ENCODE measurements at regions of chr1 and their contacts with region 1.

Region 1: DNA sequence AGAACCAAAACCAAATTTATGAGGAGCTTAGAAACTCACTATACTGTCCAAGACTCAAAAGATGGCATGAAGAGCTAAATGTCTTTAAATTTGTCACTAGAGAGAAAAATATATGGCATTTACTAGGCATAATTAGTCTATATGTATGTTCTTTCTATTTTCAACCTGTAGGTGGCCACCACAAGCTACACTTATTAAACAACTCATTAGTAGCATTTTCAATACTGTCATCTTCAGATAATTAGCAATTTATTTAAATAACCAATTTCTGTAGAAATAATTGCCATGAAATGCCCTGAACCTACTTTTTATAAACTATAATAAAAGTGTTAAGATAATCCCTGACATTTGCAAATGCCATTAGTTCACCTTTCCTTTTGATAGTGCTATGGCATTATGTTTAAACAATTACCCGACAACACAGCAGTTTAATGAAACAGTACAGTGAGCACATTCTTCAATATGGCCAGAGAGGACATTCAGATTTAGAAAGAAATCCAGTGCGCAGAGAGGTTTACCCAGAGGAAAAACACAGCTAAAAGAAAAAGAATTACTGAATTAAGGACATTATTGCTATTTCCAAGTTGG is 522.5 kb downstream of the PTBP2 start:
- DNase-seq: peak; percentile 12
- ATAC-seq: 0 out of 2 replicates have a peak, but pooled peaks have one; percentile 52
- H3K4me3 ChIP-seq: no peak overlapping the region
- H3K27ac ChIP-seq: no peak overlapping the region
- H3K4me1 ChIP-seq: no peaks in the 10 kb centered on the region
- H3K27me3 ChIP-seq: no peaks in the 10 kb centered on the region
- CTCF ChIP-seq: peak; percentile 38 to 62 (median 55); a peak in 5 of 6 replicates
- POLR2A ChIP-seq: no peak
- RAD21 ChIP-seq: peak; percentile 71

Region 2: GRCh38 chr1:97254731-97255463 is 10.8 kb after region 1 on chr1:
- CTCF ChIA-PET with region 1: interaction called, 14 read pairs
- POLR2A ChIA-PET with region 1: no interaction called
- RAD21 ChIA-PET with region 1: no interaction called
- intact Hi-C with region 1: no loop called
- DNase-seq: no peak
- ATAC-seq: no peak
- H3K4me3 ChIP-seq: no peak overlapping the region
- H3K27ac ChIP-seq: no peak overlapping the region
- H3K4me1 ChIP-seq: no peaks in the 10 kb centered on the region
- H3K27me3 ChIP-seq: no peaks in the 10 kb centered on the region
- CTCF ChIP-seq: no peak
- POLR2A ChIP-seq: no peak
- RAD21 ChIP-seq: no peak

Region 3: GRCh38 chr1:97505816-97506215 is 261.7 kb after region 1 on chr1:
- CTCF ChIA-PET with region 1: no interaction called
- POLR2A ChIA-PET with region 1: no interaction called
- RAD21 ChIA-PET with region 1: no interaction called
- intact Hi-C with region 1: no loop called
- DNase-seq: no peak
- ATAC-seq: no peak
- H3K4me3 ChIP-seq: no peak overlapping the region
- H3K27ac ChIP-seq: no peak overlapping the region
- H3K4me1 ChIP-seq: no peaks in the 10 kb centered on the region
- H3K27me3 ChIP-seq: no peaks in the 10 kb centered on the region
- CTCF ChIP-seq: no peak
- POLR2A ChIP-seq: no peak
- RAD21 ChIP-seq: no peak

Region 4: DNA sequence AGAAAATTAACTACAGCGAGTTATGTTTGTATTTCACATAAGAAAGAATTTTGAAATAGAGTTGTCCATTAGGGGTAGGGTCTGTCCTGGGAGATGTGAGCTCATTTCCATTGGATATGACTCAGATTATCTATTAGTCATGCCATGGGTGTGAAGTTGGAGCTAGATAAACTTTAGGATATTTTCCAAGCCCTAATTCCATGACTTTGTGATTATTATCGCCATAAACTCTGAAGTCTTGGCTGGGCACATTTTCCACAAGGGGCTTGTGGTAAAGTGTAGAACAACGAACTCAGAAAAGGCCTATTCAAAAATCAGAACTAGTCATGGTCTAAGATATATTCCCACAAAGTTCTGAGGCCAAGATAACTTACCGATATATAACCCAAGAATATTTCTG is 280.1 kb after region 1 on chr1:
- CTCF ChIA-PET with region 1: interaction called, 13 read pairs
- POLR2A ChIA-PET with region 1: no interaction called
- RAD21 ChIA-PET with region 1: interaction called, 5 to 6 read pairs
- intact Hi-C with region 1: loop called (anchors 5 kb)
- DNase-seq: no peak
- ATAC-seq: no peak
- H3K4me3 ChIP-seq: no peak overlapping the region
- H3K27ac ChIP-seq: no peak overlapping the region
- H3K4me1 ChIP-seq: no peaks in the 10 kb centered on the region
- H3K27me3 ChIP-seq: no peaks in the 10 kb centered on the region
- CTCF ChIP-seq: no peak
- POLR2A ChIP-seq: no peak
- RAD21 ChIP-seq: no peak

Region 5: DNA sequence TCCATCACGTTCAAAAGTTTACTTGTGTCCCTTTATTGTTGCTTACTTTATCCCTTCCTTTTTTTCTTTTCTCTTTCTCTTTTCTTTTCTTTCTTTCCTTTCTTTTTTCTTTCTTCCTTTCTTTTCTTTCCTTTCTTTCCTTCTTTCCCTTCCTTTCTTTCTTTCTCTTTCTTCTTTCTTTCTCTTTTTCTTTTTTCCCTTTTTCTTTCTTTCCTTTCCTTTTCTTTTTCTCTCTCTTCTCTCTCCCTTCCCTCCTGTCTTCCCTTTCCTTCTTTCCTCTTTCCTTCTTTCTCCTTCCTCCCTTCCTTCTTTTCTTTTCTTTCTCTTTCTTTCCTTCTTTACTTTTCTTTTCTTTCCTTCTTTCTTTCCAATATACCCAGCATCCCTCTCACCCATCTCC is 285.5 kb after region 1 on chr1:
- CTCF ChIA-PET with region 1: interaction called, 13 read pairs
- POLR2A ChIA-PET with region 1: no interaction called
- RAD21 ChIA-PET with region 1: interaction called, 5 to 6 read pairs
- intact Hi-C with region 1: loop called (anchors 5 kb)
- DNase-seq: no peak
- ATAC-seq: no peak
- H3K4me3 ChIP-seq: no peak overlapping the region
- H3K27ac ChIP-seq: no peak overlapping the region
- H3K4me1 ChIP-seq: no peaks in the 10 kb centered on the region
- H3K27me3 ChIP-seq: no peaks in the 10 kb centered on the region
- CTCF ChIP-seq: no peak
- POLR2A ChIP-seq: no peak
- RAD21 ChIP-seq: no peak

Region 6: DNA sequence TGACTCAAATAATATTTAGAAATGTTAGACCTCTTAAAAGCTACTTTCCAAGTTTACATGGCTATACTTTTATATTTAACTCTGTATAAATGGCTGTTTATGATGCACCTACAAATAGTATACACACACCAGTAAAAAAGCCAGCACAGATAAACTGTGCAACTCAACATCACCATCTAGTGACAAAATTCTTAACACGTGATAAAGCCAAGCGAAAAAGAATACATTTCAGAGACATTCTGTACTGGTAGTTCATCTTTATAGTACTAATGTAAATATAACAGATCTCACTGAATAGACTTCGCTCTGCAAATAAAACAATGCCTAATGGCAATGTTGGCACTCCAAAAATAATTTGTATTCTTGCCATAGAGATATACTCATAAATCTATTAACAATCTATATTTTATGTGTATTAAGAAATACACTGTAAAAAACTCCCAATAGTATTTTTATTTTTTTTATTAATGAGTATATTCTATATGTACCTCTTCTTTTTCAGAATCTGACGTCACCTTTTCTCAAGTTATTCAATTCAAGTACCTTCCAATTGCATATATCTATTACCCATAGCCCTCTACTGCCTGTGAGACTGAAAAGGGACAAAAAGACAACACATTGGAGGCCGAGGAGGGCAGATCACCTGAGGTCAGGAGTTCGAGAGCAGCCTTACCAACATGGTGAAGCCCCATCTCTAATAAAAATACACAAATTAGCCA is 576.6 kb after region 1 on chr1:
- CTCF ChIA-PET with region 1: interaction called, 4 read pairs
- POLR2A ChIA-PET with region 1: no interaction called
- RAD21 ChIA-PET with region 1: no interaction called
- intact Hi-C with region 1: loop called (anchors 5 kb)
- DNase-seq: peak; percentile 29
- ATAC-seq: peak; percentile 72
- H3K4me3 ChIP-seq: no peak overlapping the region
- H3K27ac ChIP-seq: no peak overlapping the region
- H3K4me1 ChIP-seq: no peaks in the 10 kb centered on the region
- H3K27me3 ChIP-seq: no peaks in the 10 kb centered on the region
- CTCF ChIP-seq: peak; percentile 30 to 67 (median 38); a peak in 5 of 6 replicates
- POLR2A ChIP-seq: no peak
- RAD21 ChIP-seq: peak; percentile 73

Measured in HCT116 (cell line).